Calu3 (cell line): ENCODE measurements at regions of chr2 and their contacts with region 1.

Region 1: DNA sequence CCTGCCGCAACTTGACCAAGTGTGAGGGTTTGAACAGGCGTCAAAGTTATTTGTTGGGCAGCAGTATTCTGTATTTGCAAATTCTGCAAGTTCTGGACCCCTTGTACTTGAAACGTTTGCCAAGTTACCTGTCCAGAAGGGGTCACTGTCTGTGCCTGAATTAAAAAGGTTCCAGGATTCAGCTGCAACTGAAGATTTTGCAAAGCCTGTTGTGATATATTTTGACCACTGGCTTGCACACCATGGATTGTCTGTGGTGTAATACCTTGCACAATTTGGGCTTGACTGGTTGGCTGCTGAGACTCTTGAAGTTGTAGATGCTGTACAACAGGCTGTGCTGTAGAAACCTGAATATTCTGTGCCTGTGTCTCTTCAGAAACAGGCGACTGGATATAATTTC is 10.2 kb downstream of the SP3 start:
- DNase-seq: no peak
- H3K4me3 Mint-ChIP-seq: no peak overlapping the region
- H3K27ac Mint-ChIP-seq: no peak overlapping the region
- H3K4me1 Mint-ChIP-seq: peaks cover 57% of the 10 kb centered on the region
- H3K27me3 Mint-ChIP-seq: no peaks in the 10 kb centered on the region
- CTCF ChIP-seq: no peak

Region 2: GRCh38 chr2:173922760-173923159 is 32.2 kb before region 1 on chr2:
- CTCF ChIA-PET with region 1: no interaction called
- intact Hi-C with region 1: loop called (anchors 5 kb)
- DNase-seq: no peak
- H3K4me3 Mint-ChIP-seq: no peak overlapping the region
- H3K27ac Mint-ChIP-seq: no peak overlapping the region
- H3K4me1 Mint-ChIP-seq: peaks cover 24% of the 10 kb centered on the region
- H3K27me3 Mint-ChIP-seq: no peaks in the 10 kb centered on the region
- CTCF ChIP-seq: no peak